ENCODE measurements at regions of chr4 and their contacts with region 1.

Region 1: DNA sequence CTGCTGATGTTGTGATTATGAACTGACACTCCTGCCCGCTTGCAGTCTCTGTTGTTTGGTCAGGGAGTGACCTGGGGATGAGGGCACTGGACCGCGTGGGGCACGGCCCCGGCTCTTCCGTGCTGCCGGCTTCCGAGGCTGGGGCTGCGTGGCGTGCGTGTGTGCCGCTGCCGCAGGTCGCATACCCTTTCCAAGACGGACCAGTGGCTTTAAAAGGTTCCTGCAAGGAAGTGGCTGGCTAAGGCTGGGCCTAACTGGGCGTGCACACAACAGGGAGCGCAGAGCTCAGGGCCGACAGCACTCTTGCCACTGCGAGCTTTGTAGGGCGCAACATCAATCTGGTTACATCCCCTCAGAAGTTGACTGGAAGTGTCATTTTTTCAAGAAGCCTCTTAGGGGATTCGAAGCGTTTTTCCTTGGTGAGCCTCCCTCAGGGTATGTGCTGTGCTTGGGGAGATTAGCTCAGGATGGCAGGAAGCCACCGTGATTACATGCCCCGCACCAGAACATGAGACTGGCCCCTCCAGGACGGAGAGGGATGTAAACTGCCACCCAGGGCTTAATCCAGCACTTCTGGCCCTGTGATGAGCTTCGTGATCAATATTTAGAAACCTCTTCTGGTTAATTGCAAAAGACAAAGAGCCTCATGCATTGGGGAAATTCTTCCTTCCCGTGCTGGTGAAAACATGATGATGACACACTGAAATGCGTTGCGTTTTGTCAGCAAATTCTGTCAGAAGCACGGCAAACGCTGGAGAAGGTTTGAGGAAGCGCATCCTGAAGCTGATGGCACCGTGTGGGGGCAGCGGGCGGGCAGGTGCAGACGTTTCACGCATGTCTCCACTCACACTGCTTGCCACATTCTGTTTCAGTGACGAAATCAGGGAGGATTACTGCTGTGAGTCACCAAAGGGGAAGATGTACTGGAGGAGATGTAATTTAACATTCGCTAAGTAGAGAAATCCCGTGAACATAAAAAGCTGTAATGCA is 11.1 kb downstream of the MAEA start:
- DNase-seq: no peak
- H3K4me3 ChIP-seq: no peak overlapping the region
- CTCF ChIP-seq: no peak

Region 2: DNA sequence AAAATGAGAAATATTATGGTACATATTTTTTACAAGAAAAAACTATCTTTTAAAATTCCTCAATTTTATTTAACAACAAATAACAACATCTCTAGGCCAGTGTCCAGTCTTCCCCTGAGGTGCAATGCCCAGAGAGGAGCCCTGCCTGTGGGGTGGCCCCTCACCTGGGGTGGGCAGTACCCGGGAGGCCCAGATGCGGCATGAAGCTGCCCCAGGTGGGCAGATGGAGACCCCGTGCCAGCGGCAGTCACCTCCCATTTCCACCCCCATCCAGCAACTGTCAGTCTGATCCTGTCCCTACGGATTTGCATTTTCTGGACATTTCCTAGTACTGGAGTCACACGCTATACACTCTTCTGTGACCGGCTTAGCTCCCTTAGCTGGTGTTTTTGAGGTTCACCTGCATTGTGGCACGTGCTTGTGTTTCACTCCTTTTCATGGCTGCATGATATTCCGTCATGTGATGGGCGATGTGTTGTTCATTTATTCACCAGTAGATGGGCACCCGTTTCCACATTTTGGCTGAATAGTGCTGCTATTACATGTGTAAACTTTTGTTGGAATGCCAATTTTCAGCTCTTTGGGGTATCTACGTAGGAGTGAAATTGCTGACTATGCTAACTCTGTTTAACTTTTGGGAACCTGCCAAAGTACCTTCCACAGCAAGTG is 23.0 kb before region 1 on chr4:
- CTCF ChIA-PET with region 1: no interaction called
- POLR2A ChIA-PET with region 1: no interaction called
- DNase-seq: no peak
- H3K4me3 ChIP-seq: no peak overlapping the region
- CTCF ChIP-seq: no peak

Region 3: DNA sequence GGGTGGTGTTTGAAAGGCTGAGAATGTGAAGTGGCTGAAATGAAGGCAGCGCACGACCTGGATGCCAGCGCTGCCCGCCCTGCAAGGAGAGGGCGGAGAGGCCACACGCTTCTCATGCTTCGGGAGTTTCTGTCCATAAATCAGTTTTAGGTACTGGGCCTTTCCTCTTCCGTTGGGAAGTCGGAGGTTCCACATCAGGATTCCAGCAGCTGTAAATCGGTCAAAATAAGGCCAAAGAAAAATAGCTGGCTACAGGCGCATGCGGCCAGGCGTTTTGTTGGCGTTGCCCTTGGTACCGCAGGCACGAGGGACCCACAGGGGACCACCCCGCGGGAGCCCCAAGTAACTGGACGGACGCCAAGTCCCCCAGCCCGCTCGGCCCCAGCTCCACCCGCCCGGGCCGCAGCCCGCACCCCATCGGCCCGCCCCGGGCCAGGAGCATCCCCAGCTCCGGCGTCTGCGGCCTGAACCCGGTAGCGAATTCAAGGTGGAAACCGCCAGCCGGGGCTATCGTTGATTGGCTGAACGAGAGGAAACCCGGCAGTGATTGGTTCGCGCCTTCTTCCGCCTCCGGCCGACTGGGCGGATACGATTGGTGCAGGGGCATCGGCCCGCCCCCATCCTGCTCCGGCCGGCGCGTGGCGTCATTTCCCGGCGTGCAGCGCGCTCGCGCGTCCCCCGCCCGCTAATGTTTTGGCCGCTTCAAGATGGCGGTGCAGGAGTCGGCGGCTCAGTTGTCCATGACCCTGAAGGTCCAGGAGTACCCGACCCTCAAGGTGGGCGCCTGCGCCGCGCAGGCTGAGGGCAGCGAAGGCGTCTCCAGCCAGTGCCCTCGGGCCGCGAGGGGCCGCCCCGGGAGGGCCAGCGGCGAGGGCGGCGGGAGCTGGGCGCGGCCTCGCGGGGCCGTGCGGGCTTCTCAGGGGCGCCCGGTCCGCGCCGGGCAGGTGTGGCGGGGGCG is 11.3 kb before region 1 on chr4 and contains the start of gene MAEA:
- CTCF ChIA-PET with region 1: interaction called, 4 read pairs
- POLR2A ChIA-PET with region 1: interaction called, 10 read pairs
- DNase-seq: peak; percentile 63
- H3K4me3 ChIP-seq: peak within 1 kb of the TSS; percentile 79
- CTCF ChIP-seq: no peak

Region 4: GRCh38 chr4:1604711-1605205 is 304.0 kb after region 1 on chr4:
- CTCF ChIA-PET with region 1: no interaction called
- POLR2A ChIA-PET with region 1: no interaction called
- DNase-seq: no peak
- H3K4me3 ChIP-seq: no peak overlapping the region
- CTCF ChIP-seq: no peak